ENCODE measurements at regions of chr9 and their contacts with region 1.

Region 1: GRCh38 chr9:131530920-131531832 is at the start of gene UCK1:
- DNase-seq: peak; percentile 42 to 89 (median 68)
- ATAC-seq: peak; percentile 91
- H3K4me3 ChIP-seq: peak within 1 kb of the TSS; percentile 64 to 73
- H3K4me3 Mint-ChIP-seq: peak within 1 kb of the TSS; percentile 74
- H3K27ac ChIP-seq: peak within 1 kb of the TSS; percentile 51 to 53
- H3K27ac Mint-ChIP-seq: peak within 1 kb of the TSS; percentile 55
- H3K4me1 ChIP-seq: peaks cover 35% of the 10 kb centered on the region
- H3K4me1 Mint-ChIP-seq: peaks cover 35% of the 10 kb centered on the region
- H3K27me3 ChIP-seq: no peaks in the 10 kb centered on the region
- H3K27me3 Mint-ChIP-seq: no peaks in the 10 kb centered on the region
- CTCF ChIP-seq: no peak
- total RNA-seq, gene UCK1: 22.6 to 24.7 TPM

Region 2: DNA sequence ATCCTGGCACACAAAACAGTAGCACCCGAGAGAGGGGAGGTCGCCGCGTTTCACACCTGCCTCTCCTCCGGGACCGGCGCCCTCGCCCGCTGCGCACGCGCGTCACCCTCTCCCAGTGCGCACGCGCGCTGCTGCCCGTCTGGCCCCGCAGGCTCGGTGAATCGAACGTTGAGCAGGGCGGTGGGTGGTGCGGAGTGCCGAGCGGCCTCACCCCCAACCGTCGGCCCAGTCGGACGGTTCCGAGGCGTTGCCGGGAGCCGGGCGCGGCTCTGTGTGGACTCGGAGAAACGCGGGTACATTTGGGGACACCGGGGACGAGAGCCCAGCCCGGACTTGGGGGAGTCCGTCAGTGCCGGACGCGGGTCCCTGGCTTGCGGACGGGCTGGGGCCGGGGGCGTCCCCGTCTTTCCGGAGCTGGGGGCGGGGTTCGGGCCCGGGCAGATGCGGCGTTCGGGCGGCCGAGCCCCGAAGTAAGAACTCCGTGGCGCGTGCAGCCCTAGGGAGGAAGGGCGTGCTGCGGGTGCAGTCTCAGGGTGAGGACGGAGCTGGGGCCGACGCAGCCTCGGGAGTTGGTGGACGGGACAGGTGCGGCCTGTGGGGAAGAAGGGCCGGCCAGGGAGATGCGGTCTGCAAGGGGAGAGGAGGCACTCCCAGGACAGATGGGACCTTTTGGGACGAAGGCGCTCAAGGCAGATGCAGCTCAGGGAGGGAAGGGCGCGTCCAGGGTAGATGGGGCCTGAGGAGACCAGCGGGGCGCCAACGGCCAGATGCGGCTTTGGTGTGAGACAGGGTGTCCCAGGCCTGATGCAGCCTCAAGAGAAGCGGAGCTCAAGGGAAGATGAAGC is 28.2 kb before region 1 on chr9 and contains the start of gene POMT1:
- CTCF ChIA-PET with region 1: interaction called, 4 read pairs
- POLR2A ChIA-PET with region 1: interaction called, 3 read pairs
- intact Hi-C with region 1: loop called (anchors 1 kb)
- DNase-seq: peak; percentile 76 to 95 (median 87)
- ATAC-seq: peak; percentile 56
- H3K4me3 ChIP-seq: peak within 1 kb of the TSS; percentile 79 to 83
- H3K4me3 Mint-ChIP-seq: peak within 1 kb of the TSS; percentile 94
- H3K27ac ChIP-seq: peak within 1 kb of the TSS; percentile 45 to 50
- H3K27ac Mint-ChIP-seq: peak within 1 kb of the TSS; percentile 93
- H3K4me1 ChIP-seq: peaks cover 43% of the 10 kb centered on the region
- H3K4me1 Mint-ChIP-seq: peaks cover 62% of the 10 kb centered on the region
- H3K27me3 ChIP-seq: no peaks in the 10 kb centered on the region
- H3K27me3 Mint-ChIP-seq: no peaks in the 10 kb centered on the region
- CTCF ChIP-seq: no peak
- total RNA-seq, gene POMT1: 33.9 to 40.8 TPM

Region 3: GRCh38 chr9:132354637-132355355 is 823.6 kb after region 1 on chr9 and contains the start of gene SETX:
- CTCF ChIA-PET with region 1: no interaction called
- POLR2A ChIA-PET with region 1: no interaction called
- intact Hi-C with region 1: loop called in 1 of 2 experiments (anchors 2 kb)
- DNase-seq: peak; percentile 92 to 99 (median 97)
- ATAC-seq: peak; percentile 83
- H3K4me3 ChIP-seq: peak within 1 kb of the TSS; percentile 77 to 86
- H3K4me3 Mint-ChIP-seq: peak within 1 kb of the TSS; percentile 87
- H3K27ac ChIP-seq: peak within 1 kb of the TSS; percentile 94 to 97
- H3K27ac Mint-ChIP-seq: peak within 1 kb of the TSS; percentile 98
- H3K4me1 ChIP-seq: peaks cover 40% of the 10 kb centered on the region
- H3K4me1 Mint-ChIP-seq: peaks cover 44% of the 10 kb centered on the region
- H3K27me3 ChIP-seq: no peaks in the 10 kb centered on the region
- H3K27me3 Mint-ChIP-seq: no peaks in the 10 kb centered on the region
- CTCF ChIP-seq: no peak
- total RNA-seq, gene SETX: 37.5 to 40.7 TPM